ENCODE measurements at regions of chr1 and their contacts with region 1.

Region 1: GRCh38 chr1:192803501-192803900 is 5.3 kb upstream of the RGS2 start:
- DNase-seq: no peak
- H3K4me3 ChIP-seq: no peak overlapping the region
- CTCF ChIP-seq: no peak

Region 2: GRCh38 chr1:192826791-192827477 is 23.4 kb after region 1 on chr1:
- CTCF ChIA-PET with region 1: no interaction called
- POLR2A ChIA-PET with region 1: no interaction called
- DNase-seq: no peak
- H3K4me3 ChIP-seq: no peak overlapping the region
- CTCF ChIP-seq: no peak

Region 3: DNA sequence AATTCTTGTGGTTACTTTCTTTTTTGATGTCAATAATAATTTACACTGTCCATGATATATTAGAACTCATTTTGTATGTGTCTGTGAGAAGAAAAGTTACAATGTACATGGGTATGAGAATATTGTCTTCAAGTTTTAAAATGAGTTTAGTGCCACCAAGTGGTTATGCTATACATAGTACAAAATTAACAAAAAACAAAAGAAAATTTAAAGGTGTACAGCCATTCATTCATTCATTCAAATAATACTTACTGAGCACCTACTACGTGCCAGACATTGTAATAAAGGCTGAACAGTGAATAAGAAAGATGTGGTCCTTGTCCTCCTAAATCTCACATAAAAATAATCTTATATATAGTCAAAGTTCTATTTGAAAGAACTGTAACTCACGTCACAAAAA is 227.9 kb after region 1 on chr1:
- CTCF ChIA-PET with region 1: interaction called, 38 read pairs
- POLR2A ChIA-PET with region 1: no interaction called
- DNase-seq: no peak
- H3K4me3 ChIP-seq: no peak overlapping the region
- CTCF ChIP-seq: no peak